Panc1 (cell line): ENCODE measurements at regions of chr9 and their contacts with region 1.

Region 1: DNA sequence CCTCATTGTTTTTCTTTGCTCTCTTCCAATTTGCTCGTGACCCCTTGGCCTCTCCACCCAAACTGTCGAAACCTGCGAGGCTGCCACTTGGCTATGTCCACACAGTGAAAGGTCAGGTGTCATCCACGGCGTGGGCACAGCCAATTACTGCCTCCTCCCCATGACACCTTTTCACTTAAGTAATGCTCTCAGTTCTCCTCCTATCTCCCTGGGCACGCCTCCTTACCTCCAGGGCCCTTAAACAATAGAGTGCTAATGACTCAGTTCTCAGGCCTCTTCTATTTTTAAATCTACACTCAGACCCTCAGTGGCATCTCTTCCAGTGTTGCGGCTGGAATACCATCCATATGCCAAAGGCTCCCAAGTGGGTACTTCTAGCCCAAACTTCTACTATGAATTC is 256.8 kb downstream of the ROR2 start:
- DNase-seq: no peak
- ATAC-seq: no peak
- H3K4me3 ChIP-seq: no peak overlapping the region
- H3K27ac ChIP-seq: no peak overlapping the region
- H3K4me1 ChIP-seq: no peaks in the 10 kb centered on the region
- H3K27me3 ChIP-seq: no peaks in the 10 kb centered on the region
- CTCF ChIP-seq: no peak

Region 2: DNA sequence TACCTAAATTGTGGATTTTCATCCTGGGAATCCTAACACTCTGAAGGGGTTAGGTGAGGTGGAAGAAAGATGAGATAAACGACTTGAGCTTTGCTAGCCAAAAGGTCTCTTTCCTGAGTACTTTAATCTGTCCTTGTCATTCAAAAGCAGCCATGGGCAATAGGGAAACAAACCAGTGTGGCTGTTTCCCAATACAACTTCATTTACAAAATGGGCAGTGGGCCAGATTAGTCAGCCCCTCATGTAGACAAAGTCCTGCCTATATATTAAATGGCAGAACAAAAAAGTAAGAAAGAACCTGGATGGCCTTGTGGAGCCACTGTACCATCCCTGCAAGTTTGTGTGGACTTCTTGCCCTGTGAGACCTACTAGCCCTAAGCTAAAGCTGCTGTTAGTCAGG is 218.6 kb before region 1 on chr9:
- CTCF ChIA-PET with region 1: no interaction called
- POLR2A ChIA-PET with region 1: interaction called, 11 read pairs
- in situ Hi-C with region 1: no loop called
- intact Hi-C with region 1: no loop called
- DNase-seq: no peak
- ATAC-seq: no peak
- H3K4me3 ChIP-seq: no peak overlapping the region
- H3K27ac ChIP-seq: no peak overlapping the region
- H3K4me1 ChIP-seq: no peaks in the 10 kb centered on the region
- H3K27me3 ChIP-seq: no peaks in the 10 kb centered on the region
- CTCF ChIP-seq: no peak